CD4-positive, alpha-beta T cell (primary cell): ENCODE measurements at regions of chr12 and their contacts with region 1.

Region 1: GRCh38 chr12:120265473-120266179 is at the start of gene PXN:
- DNase-seq: peak; percentile 82 to 96 (median 91)
- ATAC-seq: peak; percentile 83
- H3K4me3 ChIP-seq: peak within 1 kb of the TSS; percentile 95
- H3K4me3 Mint-ChIP-seq: peak within 1 kb of the TSS; percentile 96
- H3K27ac ChIP-seq: peak within 1 kb of the TSS; percentile 60 to 83
- H3K27ac Mint-ChIP-seq: peak within 1 kb of the TSS; percentile 95
- H3K4me1 ChIP-seq: peaks cover 46% of the 10 kb centered on the region
- H3K4me1 Mint-ChIP-seq: peaks cover 49% of the 10 kb centered on the region
- H3K27me3 ChIP-seq: no peaks in the 10 kb centered on the region
- H3K27me3 Mint-ChIP-seq: no peaks in the 10 kb centered on the region
- CTCF ChIP-seq: peak; percentile 72
- total RNA-seq, gene PXN: 229 to 230 TPM

Region 2: GRCh38 chr12:120116792-120117651 is 148.6 kb before region 1 on chr12:
- CTCF ChIA-PET with region 1: no interaction called
- POLR2A ChIA-PET with region 1: no interaction called
- intact Hi-C with region 1: loop called in 1 of 2 experiments (anchors 10 kb)
- DNase-seq: peak; percentile 96 to 99 (median 98)
- ATAC-seq: peak; percentile 75
- H3K4me3 ChIP-seq: peak overlapping the region; percentile 86
- H3K4me3 Mint-ChIP-seq: peak overlapping the region; percentile 91
- H3K27ac ChIP-seq: peak overlapping the region; percentile 94 to 95
- H3K27ac Mint-ChIP-seq: peak overlapping the region; percentile 84
- H3K4me1 ChIP-seq: peaks cover 61% of the 10 kb centered on the region
- H3K4me1 Mint-ChIP-seq: peaks cover 76% of the 10 kb centered on the region
- H3K27me3 ChIP-seq: no peaks in the 10 kb centered on the region
- H3K27me3 Mint-ChIP-seq: no peaks in the 10 kb centered on the region
- CTCF ChIP-seq: no peak

Region 3: GRCh38 chr12:120200364-120200800 is 65.2 kb before region 1 on chr12:
- CTCF ChIA-PET with region 1: interaction called, 16 read pairs
- POLR2A ChIA-PET with region 1: interaction called, 80 read pairs
- intact Hi-C with region 1: no loop called
- DNase-seq: peak in 1 of 14 experiments; percentile 50
- ATAC-seq: no peak
- H3K4me3 ChIP-seq: peak overlapping the region; percentile 94
- H3K4me3 Mint-ChIP-seq: peak overlapping the region; percentile 99
- H3K27ac ChIP-seq: peak overlapping the region; percentile 67 to 74
- H3K27ac Mint-ChIP-seq: peak overlapping the region; percentile 91
- H3K4me1 ChIP-seq: peaks cover 46% of the 10 kb centered on the region
- H3K4me1 Mint-ChIP-seq: peaks cover 47% of the 10 kb centered on the region
- H3K27me3 ChIP-seq: no peaks in the 10 kb centered on the region
- H3K27me3 Mint-ChIP-seq: no peaks in the 10 kb centered on the region
- CTCF ChIP-seq: no peak

Region 4: GRCh38 chr12:120234643-120235368 is 30.8 kb before region 1 on chr12:
- CTCF ChIA-PET with region 1: interaction called, 234 read pairs
- POLR2A ChIA-PET with region 1: interaction called, 192 read pairs
- intact Hi-C with region 1: no loop called
- DNase-seq: peak in 2 of 14 experiments; percentile 39 to 56
- ATAC-seq: no peak
- H3K4me3 ChIP-seq: no peak overlapping the region
- H3K4me3 Mint-ChIP-seq: no peak overlapping the region
- H3K27ac ChIP-seq: no peak overlapping the region
- H3K27ac Mint-ChIP-seq: peak overlapping the region; percentile 88
- H3K4me1 ChIP-seq: peaks cover 99% of the 10 kb centered on the region
- H3K4me1 Mint-ChIP-seq: peaks cover 85% of the 10 kb centered on the region
- H3K27me3 ChIP-seq: no peaks in the 10 kb centered on the region
- H3K27me3 Mint-ChIP-seq: no peaks in the 10 kb centered on the region
- CTCF ChIP-seq: no peak

Region 5: DNA sequence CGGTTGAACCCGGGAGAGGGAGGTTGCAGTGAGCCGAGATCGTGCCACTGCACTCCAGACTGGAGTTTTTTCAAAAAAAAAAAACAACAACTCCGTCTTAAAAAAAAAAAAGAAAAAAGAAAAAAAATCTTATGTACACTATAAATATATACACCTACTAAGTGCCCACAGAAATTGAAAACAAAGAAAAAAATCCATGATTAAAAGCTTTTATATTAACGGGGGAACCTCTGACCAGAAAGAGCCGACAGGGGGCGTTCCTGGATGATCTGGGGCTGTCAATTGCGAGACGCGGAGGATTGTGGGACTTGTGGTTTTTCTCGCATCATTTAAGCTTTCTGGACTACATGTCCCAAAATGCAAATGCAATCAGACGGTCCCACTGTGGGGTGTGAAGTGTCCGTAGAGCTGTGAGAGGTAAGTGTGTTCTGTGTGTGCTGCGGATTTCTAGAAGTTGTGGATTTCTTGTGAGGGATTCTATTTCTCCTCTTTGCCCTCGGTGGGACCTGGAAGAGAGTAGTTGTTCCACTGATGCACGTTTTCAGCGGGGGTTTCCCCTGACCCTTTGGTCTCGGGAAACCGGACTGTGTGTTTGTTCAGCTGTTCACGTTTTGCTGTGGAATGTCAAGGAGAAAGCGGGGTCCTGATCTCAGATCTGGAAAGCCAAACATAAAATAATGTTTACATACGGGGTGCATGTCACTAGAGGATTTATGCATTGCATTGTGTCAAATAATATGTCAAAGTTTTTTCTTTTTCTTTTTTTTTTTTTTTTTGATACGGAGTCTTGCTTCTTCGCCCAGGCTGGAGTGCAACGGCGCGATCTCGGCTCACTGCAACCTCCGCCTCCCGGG is 36.6 kb after region 1 on chr12 and contains the start of gene SIRT4:
- CTCF ChIA-PET with region 1: interaction called, 11 read pairs
- POLR2A ChIA-PET with region 1: interaction called, 8 read pairs
- intact Hi-C with region 1: no loop called
- DNase-seq: peak; percentile 77 to 96 (median 86)
- ATAC-seq: peak; percentile 99
- H3K4me3 ChIP-seq: peak within 1 kb of the TSS; percentile 97
- H3K4me3 Mint-ChIP-seq: peak within 1 kb of the TSS; percentile 97
- H3K27ac ChIP-seq: peak within 1 kb of the TSS in 1 of 2 donors; percentile 60
- H3K27ac Mint-ChIP-seq: peak within 1 kb of the TSS; percentile 79
- H3K4me1 ChIP-seq: peaks cover 13% of the 10 kb centered on the region
- H3K4me1 Mint-ChIP-seq: peaks cover 11% of the 10 kb centered on the region
- H3K27me3 ChIP-seq: no peaks in the 10 kb centered on the region
- H3K27me3 Mint-ChIP-seq: no peaks in the 10 kb centered on the region
- CTCF ChIP-seq: peak; percentile 78
- total RNA-seq, gene SIRT4: 0.59 TPM in 1 of 2 experiments, not detected in the other